ENCODE measurements at regions of chr15 and their contacts with region 1.

Region 1: DNA sequence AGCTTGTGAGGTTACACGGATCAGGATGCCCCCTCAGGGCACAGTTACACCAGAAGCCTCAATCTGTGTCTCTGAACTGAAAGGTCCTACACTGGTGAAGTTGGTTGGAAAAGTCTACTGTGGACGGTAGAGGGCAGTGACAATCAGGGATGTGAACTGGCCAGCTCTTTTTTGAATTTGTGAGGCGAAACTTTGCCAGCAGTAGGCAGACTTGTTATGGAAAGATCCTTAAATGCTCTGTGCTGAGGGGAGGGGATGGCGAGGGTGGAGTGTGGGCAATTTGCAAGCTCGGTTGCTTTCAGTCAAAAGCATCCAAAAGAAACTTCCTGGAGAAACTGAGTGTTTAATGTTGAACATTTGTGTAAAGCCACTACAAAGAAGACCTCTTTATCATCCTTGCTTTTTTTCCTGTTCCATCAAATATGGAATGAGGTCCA is 127.4 kb upstream of the ABHD17C start:
- DNase-seq: peak; percentile 47
- ATAC-seq: peak; percentile 94
- H3K4me3 ChIP-seq: no peak overlapping the region
- H3K27ac ChIP-seq: no peak overlapping the region
- H3K4me1 ChIP-seq: no peaks in the 10 kb centered on the region
- H3K27me3 ChIP-seq: no peaks in the 10 kb centered on the region
- CTCF ChIP-seq: peak; percentile 89

Region 2: GRCh38 chr15:80455668-80456442 is 111.9 kb before region 1 on chr15:
- CTCF ChIA-PET with region 1: interaction called, 3 read pairs
- POLR2A ChIA-PET with region 1: no interaction called
- in situ Hi-C with region 1: no loop called
- intact Hi-C with region 1: loop called (anchors 10 kb)
- DNase-seq: peak; percentile 53
- ATAC-seq: peak; percentile 80
- H3K4me3 ChIP-seq: no peak overlapping the region
- H3K27ac ChIP-seq: no peak overlapping the region
- H3K4me1 ChIP-seq: peaks cover 10% of the 10 kb centered on the region
- H3K27me3 ChIP-seq: 0 out of 2 replicates have a peak, but pooled peaks cover 2% of the 10 kb centered on the region
- CTCF ChIP-seq: peak; percentile 98

Region 3: DNA sequence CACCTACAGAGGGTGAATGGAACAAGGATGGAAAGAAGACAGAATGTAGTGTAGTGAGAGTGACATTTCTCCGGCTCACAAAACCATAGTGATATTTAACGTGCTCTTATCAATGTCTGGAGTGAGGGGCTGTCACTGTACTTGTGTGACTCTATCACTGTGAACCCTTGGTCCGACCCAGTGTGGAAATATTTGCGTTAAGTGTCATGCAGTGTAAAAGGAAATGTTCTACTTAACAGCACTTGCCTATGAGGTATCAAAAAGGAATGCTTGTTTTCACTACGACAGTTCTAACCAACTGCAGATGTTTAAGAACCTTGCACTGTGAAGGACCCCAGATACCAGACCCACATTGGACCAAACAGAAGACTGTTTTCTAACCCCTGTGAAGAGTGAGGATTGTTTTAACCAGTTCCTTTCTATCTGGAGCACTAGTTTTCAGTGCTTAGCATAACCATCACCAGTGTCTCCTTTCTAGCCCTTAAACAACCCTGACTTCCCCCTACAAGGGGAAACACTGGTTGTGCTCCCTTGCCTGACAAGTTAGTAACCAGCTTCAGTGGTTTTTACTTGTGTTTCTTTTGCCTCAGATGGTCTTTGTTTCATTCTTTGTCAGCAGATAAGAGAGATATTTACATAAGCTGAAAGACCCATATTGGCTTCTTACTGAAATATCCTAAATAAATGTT is 17.4 kb before region 1 on chr15:
- CTCF ChIA-PET with region 1: no interaction called
- POLR2A ChIA-PET with region 1: no interaction called
- in situ Hi-C with region 1: no loop called
- intact Hi-C with region 1: no loop called
- DNase-seq: no peak
- ATAC-seq: peak; percentile 56; the same call in 1 of the 2 replicates
- H3K4me3 ChIP-seq: no peak overlapping the region
- H3K27ac ChIP-seq: no peak overlapping the region
- H3K4me1 ChIP-seq: no peaks in the 10 kb centered on the region
- H3K27me3 ChIP-seq: peaks cover 6% of the 10 kb centered on the region; the same call in 1 of the 2 replicates
- CTCF ChIP-seq: no peak

Region 4: DNA sequence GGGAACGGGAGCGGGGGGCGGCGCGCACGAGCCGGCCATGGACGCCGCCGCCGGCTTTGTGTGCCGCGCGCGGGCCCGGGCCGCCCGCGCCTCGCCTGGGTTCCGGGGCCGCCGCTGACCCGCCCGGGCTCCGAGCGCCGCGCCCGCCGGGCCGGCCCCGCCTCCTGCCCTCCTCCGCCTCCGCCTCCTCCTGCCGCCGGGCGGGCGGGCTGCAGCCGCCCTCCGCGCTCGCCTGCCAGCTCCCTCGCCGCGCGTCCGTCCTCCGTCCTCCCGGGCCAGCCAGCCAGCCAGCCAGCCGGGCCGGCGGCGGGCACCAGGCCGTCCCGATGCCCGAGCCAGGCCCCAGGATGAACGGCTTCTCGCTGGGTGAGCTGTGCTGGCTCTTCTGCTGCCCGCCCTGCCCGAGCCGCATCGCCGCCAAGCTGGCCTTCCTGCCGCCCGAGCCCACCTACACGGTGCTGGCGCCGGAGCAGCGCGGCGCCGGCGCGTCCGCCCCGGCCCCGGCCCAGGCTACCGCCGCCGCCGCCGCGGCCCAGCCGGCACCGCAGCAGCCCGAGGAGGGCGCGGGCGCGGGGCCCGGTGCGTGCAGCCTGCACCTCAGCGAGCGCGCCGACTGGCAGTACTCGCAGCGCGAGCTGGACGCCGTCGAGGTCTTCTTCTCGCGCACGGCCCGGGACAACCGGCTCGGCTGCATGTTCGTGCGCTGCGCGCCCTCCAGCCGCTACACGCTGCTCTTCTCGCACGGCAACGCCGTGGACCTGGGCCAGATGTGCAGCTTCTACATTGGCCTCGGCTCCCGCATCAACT is 127.6 kb after region 1 on chr15 and contains the start of gene ABHD17C:
- CTCF ChIA-PET with region 1: interaction called, 13 read pairs
- POLR2A ChIA-PET with region 1: no interaction called
- in situ Hi-C with region 1: no loop called
- intact Hi-C with region 1: no loop called
- DNase-seq: no peak
- ATAC-seq: peak; percentile 92
- H3K4me3 ChIP-seq: peak within 1 kb of the TSS; percentile 69 to 84
- H3K27ac ChIP-seq: peak within 1 kb of the TSS; percentile 88
- H3K4me1 ChIP-seq: peaks cover 16% of the 10 kb centered on the region
- H3K27me3 ChIP-seq: no peaks in the 10 kb centered on the region
- CTCF ChIP-seq: no peak
- total RNA-seq, gene ABHD17C: 16.3 TPM

Region 5: GRCh38 chr15:80970018-80970658 is 402.4 kb after region 1 on chr15:
- CTCF ChIA-PET with region 1: no interaction called
- POLR2A ChIA-PET with region 1: no interaction called
- in situ Hi-C with region 1: no loop called
- intact Hi-C with region 1: loop called (anchors 5 kb)
- DNase-seq: no peak
- ATAC-seq: peak; percentile 85
- H3K4me3 ChIP-seq: no peak overlapping the region
- H3K27ac ChIP-seq: no peak overlapping the region
- H3K4me1 ChIP-seq: no peaks in the 10 kb centered on the region
- H3K27me3 ChIP-seq: no peaks in the 10 kb centered on the region
- CTCF ChIP-seq: peak; percentile 92

Region 6: GRCh38 chr15:81087066-81087465 is 519.3 kb after region 1 on chr15:
- CTCF ChIA-PET with region 1: interaction called, 16 read pairs
- POLR2A ChIA-PET with region 1: no interaction called
- in situ Hi-C with region 1: no loop called
- intact Hi-C with region 1: no loop called
- DNase-seq: no peak
- ATAC-seq: no peak
- H3K4me3 ChIP-seq: no peak overlapping the region
- H3K27ac ChIP-seq: no peak overlapping the region
- H3K4me1 ChIP-seq: peaks cover 2% of the 10 kb centered on the region
- H3K27me3 ChIP-seq: no peaks in the 10 kb centered on the region
- CTCF ChIP-seq: no peak

Measured in Panc1 (cell line).